GM12878 (cell line): ENCODE measurements at regions of chr20 and their contacts with region 1.

Region 1: GRCh38 chr20:48787861-48788375 is 39.9 kb downstream of the PREX1 start:
- DNase-seq: no peak
- ATAC-seq: peak; percentile 36
- H3K4me3 ChIP-seq: peak overlapping the region; percentile 46
- H3K27ac ChIP-seq: peak overlapping the region; percentile 95
- H3K4me1 ChIP-seq: peaks cover 85% of the 10 kb centered on the region
- H3K27me3 ChIP-seq: no peaks in the 10 kb centered on the region
- CTCF ChIP-seq: no peak
- EP300 ChIP-seq: no peak
- POLR2A ChIP-seq: no peak
- RAD21 ChIP-seq: no peak

Region 2: DNA sequence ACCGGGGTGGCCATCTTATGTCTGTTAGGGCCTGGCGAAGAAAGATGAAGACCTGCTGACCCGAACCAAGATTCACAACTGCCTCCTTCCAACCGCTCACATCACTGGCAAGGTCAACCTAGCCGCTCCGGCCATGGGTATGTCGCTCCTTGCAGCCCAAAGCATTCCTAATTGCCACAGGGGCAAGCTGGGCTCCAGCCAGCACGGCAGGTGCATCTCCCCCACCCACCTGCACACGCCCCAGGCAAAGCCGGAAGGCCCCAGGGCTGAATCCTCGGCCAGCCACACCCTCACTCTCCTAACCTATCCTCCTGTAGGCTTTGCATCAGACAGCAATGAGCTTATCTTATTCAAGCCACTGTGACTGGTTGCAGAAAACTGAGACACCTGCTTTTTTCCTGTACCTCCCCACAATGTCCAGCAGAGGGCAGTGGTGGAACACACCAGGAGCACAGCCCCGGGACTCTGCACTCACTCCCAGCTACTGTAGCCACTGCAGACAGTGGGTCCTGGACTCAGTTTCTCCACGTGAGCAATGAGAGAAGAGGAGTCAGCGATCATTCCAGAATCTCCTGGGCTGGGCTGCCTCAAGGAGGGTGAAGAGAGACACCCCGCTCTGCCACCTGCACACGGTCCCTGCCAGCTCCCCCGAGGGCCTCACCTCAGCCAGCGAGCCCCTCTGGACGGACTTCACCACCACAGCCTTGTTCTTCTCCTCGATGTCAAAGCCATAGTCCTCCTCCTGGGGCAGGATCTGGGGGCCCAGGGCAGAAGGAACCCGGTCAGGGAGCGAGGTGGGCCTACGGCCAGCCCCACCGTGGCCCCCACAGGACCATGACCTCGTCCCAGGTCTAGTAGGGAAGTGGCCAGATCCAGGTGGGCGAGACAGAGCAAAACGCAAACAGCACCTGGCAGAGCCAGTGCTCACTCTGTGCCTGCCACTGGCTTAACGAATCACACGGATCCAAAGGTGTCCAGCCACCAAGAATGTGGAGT is 130.1 kb before region 1 on chr20:
- CTCF ChIA-PET with region 1: interaction called, 5 read pairs
- POLR2A ChIA-PET with region 1: interaction called, 3 read pairs
- RAD21 ChIA-PET with region 1: interaction called, 12 read pairs
- SMC1A ChIA-PET with region 1: interaction called, 6 read pairs
- in situ Hi-C with region 1: no loop called
- intact Hi-C with region 1: no loop called
- DNase-seq: peak; percentile 21
- ATAC-seq: peak; percentile 94
- H3K4me3 ChIP-seq: no peak overlapping the region
- H3K27ac ChIP-seq: no peak overlapping the region
- H3K4me1 ChIP-seq: no peaks in the 10 kb centered on the region
- H3K27me3 ChIP-seq: no peaks in the 10 kb centered on the region
- CTCF ChIP-seq: peak; percentile 91 to 96 (median 93)
- EP300 ChIP-seq: no peak
- POLR2A ChIP-seq: no peak
- RAD21 ChIP-seq: peak; percentile 95

Region 3: GRCh38 chr20:48738399-48739304 is 49.3 kb before region 1 on chr20:
- CTCF ChIA-PET with region 1: interaction called, 13 read pairs
- POLR2A ChIA-PET with region 1: interaction called, 28 read pairs
- RAD21 ChIA-PET with region 1: interaction called, 42 read pairs
- SMC1A ChIA-PET with region 1: interaction called, 34 read pairs
- in situ Hi-C with region 1: no loop called
- intact Hi-C with region 1: loop called (anchors 2 kb)
- DNase-seq: peak; percentile 92
- ATAC-seq: peak; percentile 83
- H3K4me3 ChIP-seq: peak overlapping the region; percentile 41; the same call in 1 of the 2 replicates
- H3K27ac ChIP-seq: peak overlapping the region; percentile 95
- H3K4me1 ChIP-seq: peaks cover 54% of the 10 kb centered on the region
- H3K27me3 ChIP-seq: no peaks in the 10 kb centered on the region
- CTCF ChIP-seq: no peak
- EP300 ChIP-seq: peak; percentile 99
- POLR2A ChIP-seq: no peak
- RAD21 ChIP-seq: peak; percentile 17; the same call in 1 of the 2 replicates

Region 4: DNA sequence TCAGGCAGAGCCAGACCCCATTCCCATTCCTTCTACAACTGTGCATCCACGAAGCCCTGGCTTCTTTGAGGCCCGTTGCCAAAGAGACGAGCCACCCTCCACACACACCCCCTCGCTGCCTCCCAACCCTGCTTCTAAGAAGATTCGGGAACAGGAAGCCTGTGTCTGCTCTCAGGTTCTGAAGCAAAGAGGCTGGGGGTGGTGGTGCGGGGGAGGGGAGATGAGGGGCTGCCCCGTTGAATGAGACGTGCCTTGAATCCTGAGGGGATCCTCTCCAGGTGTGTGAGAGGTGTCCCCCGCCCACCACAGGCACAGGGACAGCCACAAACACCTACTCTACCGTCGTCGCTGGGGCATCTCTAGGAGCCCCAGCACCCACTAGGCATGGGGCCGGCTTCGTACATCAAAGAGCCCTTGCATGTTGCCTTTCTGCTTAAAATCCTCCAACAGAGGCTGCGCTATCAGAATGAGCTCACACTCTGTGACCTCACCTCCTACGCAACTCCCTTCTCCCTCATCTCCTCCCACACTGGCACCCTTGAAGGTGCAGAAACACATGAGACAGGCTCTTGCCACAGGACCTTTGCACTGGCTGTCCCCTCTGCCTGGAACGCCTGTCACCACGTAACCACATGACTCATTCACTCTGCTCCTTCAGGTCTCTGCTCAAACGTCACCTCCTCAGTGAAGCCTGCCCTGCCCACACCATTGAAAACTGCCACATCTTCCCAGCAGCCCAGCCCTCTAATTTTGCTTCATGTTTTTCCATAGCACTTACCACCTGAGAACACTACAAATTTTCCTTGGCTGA is 18.6 kb before region 1 on chr20:
- CTCF ChIA-PET with region 1: interaction called, 4 read pairs
- POLR2A ChIA-PET with region 1: interaction called, 4 read pairs
- RAD21 ChIA-PET with region 1: interaction called, 6 read pairs
- SMC1A ChIA-PET with region 1: interaction called, 15 read pairs
- in situ Hi-C with region 1: no loop called
- intact Hi-C with region 1: no loop called
- DNase-seq: no peak
- ATAC-seq: peak; percentile 92
- H3K4me3 ChIP-seq: no peak overlapping the region
- H3K27ac ChIP-seq: peak overlapping the region; percentile 26; the same call in 1 of the 2 replicates
- H3K4me1 ChIP-seq: peaks cover 48% of the 10 kb centered on the region
- H3K27me3 ChIP-seq: no peaks in the 10 kb centered on the region
- CTCF ChIP-seq: no peak
- EP300 ChIP-seq: peak in 1 of 2 experiments; percentile 75; a peak in 2 of 4 replicates
- POLR2A ChIP-seq: peak; percentile 51
- RAD21 ChIP-seq: no peak

Region 5: DNA sequence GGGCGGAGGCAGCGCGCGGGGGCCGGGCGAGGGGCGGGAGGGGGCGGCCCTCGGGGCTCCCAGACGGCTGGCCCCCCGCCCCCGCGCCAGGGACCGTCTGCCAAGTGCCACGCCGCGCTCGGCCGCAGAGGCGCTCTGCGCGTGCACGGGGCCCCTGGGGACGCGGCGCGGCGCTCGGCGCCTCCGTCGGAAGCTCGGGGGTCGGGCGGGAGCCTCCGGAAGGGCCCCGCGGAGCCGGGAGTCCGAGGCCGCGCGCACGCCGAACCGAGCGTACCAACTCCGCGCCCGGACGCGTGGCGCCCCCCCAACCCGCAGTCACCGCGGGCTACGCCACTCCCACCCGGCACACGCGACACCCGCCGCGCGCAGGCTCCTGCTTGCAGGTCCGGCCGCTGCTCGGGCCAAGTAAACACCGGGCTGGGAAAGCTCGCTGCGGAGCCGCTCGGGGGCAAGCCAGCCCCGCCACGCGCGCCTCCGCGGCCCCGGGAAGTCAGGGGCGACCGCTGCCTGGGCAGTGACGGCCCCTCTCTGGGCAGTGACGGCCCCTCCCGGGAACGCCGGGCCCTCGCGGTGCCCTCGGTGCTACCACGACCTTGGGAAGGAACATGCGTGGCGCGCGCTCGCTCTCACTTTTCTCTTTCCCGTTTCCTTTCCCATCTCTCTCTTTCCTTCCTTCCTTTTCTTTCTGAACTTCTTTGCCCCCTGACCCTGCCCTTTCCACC is 40.3 kb after region 1 on chr20:
- CTCF ChIA-PET with region 1: interaction called, 6 read pairs
- POLR2A ChIA-PET with region 1: interaction called, 7 read pairs
- RAD21 ChIA-PET with region 1: interaction called, 37 read pairs
- SMC1A ChIA-PET with region 1: interaction called, 36 read pairs
- in situ Hi-C with region 1: no loop called
- intact Hi-C with region 1: loop called (anchors 2 kb)
- DNase-seq: no peak
- ATAC-seq: peak; percentile 53
- H3K4me3 ChIP-seq: peak overlapping the region; percentile 62
- H3K27ac ChIP-seq: peak overlapping the region; percentile 76
- H3K4me1 ChIP-seq: peaks cover 34% of the 10 kb centered on the region
- H3K27me3 ChIP-seq: no peaks in the 10 kb centered on the region
- CTCF ChIP-seq: peak in 1 of 3 experiments; percentile 8; a peak in 1 of 6 replicates
- EP300 ChIP-seq: no peak
- POLR2A ChIP-seq: peak; percentile 74
- RAD21 ChIP-seq: peak; percentile 21; the same call in 1 of the 2 replicates